WTC11 (cell line): ENCODE measurements at regions of chr1 and their contacts with region 1.

Region 1: DNA sequence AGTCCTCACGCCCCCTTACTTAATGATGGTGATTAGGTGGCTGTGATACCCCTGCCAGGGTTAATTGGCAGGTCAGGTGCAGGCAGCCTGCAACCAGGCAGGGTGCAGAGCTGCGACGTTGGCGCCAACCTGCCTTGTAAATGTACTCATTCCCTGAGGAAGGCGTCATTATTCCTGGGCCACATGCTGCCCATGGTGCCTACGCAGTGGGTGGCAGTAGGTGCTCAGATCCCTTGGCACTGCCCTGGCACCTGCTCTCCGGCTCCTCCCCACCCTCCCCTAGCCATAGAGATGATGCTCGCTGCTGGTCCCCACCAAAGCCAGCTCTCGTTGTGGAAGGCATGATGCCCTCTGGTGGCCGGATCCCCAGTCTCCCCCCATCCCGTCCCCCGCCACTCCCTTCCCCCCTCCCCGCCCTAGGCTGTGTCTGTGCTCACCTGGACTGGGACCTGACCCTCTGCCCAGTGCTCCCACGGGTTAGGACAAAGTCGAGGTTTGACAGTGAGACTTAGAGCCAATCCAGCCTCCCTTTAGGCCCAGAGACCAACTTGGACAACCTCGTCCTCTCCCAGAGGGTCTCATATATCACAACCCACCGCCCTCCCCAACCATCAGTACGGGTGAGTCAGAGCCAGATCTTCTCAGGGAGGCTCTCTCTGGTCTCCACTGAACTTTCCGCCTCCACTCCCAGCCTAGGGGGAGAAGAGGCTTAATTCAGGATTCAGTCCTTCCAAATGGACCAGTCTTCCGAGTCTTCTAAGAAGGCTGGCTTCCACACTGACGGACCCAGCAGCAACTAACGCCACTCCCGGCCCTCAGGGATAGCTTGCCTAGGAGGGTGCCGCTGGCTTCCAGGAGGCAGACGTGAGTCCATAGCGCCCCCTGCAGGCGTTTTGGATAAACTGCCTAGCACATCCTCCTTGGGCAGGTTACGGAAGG is 5.7 kb downstream of the KRTCAP2 start:
- DNase-seq: peak; percentile 95
- ATAC-seq: peak; percentile 75
- H3K4me3 Mint-ChIP-seq: peak overlapping the region; percentile 89
- H3K27ac Mint-ChIP-seq: peak overlapping the region; percentile 90
- H3K4me1 Mint-ChIP-seq: peaks cover 24% of the 10 kb centered on the region
- H3K27me3 Mint-ChIP-seq: no peaks in the 10 kb centered on the region; the same call in 1 of the 2 replicates
- CTCF ChIP-seq: peak; percentile 94

Region 2: DNA sequence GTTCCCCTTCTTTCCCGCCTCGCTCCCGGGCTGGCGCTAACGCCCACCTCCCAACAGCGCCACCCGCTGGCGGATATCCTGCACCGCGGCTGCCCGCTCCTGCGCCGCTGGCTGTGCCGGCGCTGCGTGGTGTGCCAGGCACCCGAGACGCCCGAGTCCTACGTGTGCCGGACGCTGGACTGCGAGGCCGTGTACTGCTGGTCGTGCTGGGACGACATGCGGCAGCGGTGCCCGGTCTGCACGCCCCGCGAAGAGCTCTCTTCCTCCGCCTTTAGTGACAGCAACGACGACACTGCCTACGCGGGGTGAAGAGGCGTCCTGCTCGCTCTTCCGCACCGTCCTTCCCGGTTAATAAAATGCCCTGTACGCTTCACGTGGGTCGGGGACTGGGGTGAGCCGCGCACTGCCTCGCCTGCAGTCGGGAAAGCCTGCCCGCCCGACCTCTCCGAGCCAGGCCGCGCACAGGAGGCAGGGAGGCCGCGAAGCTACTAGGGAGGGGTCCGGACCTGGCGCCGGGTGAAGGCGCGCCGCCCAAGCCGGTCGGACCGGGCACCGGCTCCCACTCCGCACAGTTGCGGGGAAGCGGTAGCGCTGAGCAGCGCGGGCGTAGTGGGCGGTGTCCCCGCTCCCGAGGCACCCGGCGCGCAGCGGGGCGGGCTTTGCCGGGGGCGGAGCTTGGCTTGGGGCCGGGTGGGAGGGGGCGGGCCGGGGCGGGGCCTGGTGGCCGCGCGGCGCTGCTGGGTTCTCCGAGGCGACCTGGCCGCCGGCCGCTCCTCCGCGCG is 116.7 kb before region 1 on chr1 and contains the start of gene ADAM15:
- CTCF ChIA-PET with region 1: interaction called, 29 read pairs
- POLR2A ChIA-PET with region 1: no interaction called
- DNase-seq: peak; percentile 92
- ATAC-seq: peak; percentile 72
- H3K4me3 Mint-ChIP-seq: peak within 1 kb of the TSS; percentile 82
- H3K27ac Mint-ChIP-seq: peak within 1 kb of the TSS; percentile 72; the same call in 1 of the 2 replicates
- H3K4me1 Mint-ChIP-seq: peaks cover 33% of the 10 kb centered on the region
- H3K27me3 Mint-ChIP-seq: peaks cover 20% of the 10 kb centered on the region
- CTCF ChIP-seq: peak; percentile 97
- total RNA-seq, gene ADAM15: 32.1 to 38.4 TPM (median 33.2 TPM) in 3 replicates

Region 3: GRCh38 chr1:155091071-155091709 is 76.2 kb before region 1 on chr1:
- CTCF ChIA-PET with region 1: interaction called, 605 read pairs
- POLR2A ChIA-PET with region 1: interaction called, 6 read pairs
- DNase-seq: peak; percentile 94
- ATAC-seq: peak; percentile 80
- H3K4me3 Mint-ChIP-seq: peak overlapping the region; percentile 32
- H3K27ac Mint-ChIP-seq: no peak overlapping the region
- H3K4me1 Mint-ChIP-seq: peaks cover 30% of the 10 kb centered on the region
- H3K27me3 Mint-ChIP-seq: peaks cover 12% of the 10 kb centered on the region
- CTCF ChIP-seq: peak; percentile 99

Region 4: GRCh38 chr1:155127105-155127964 is 40.1 kb before region 1 on chr1 and contains the start of gene EFNA1:
- CTCF ChIA-PET with region 1: interaction called, 164 read pairs
- POLR2A ChIA-PET with region 1: interaction called, 5 read pairs
- DNase-seq: peak; percentile 61
- ATAC-seq: peak; percentile 24
- H3K4me3 Mint-ChIP-seq: peak within 1 kb of the TSS; percentile 90
- H3K27ac Mint-ChIP-seq: no peak within 1 kb of the TSS; the same call in 1 of the 2 replicates
- H3K4me1 Mint-ChIP-seq: peaks cover 55% of the 10 kb centered on the region
- H3K27me3 Mint-ChIP-seq: peaks cover 55% of the 10 kb centered on the region
- CTCF ChIP-seq: no peak
- total RNA-seq, gene EFNA1: 6.0 to 7.3 TPM (median 6.5 TPM) in 3 replicates

Region 5: DNA sequence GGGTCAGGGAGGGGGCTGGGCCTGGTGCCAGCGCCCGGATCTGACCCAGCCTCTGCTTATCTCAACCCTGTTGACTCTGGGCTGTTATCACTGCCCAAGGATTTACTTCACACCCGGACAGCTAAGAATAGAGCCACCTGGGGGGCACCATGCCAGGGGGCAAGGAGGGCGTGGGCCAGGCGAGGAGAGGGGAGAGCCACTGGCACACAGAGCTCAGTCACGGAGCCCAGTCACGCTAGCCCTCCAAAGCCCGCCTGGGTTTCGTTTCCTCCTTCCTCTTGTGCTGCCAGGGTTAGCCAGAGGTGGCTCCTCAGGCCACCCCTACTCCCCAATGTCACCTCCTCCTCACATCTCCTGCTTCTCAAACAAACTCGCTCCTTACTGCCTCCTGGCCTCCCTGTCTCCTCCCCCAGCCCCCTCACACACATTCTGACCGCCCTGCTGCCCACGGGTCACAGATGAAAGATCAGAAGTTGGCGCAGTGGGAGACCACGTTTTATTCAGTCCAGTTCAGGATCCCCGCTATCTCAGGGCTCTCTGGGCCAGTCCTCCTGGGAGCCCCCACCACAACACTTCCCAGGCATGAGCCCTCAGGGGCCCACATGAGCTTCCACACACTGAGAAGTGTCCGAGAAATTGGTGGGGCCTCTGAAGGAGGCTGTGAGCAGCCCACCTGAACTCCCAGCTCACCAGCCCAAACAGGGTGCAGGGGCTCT is 18.1 kb after region 1 on chr1:
- CTCF ChIA-PET with region 1: interaction called, 31 read pairs
- POLR2A ChIA-PET with region 1: no interaction called
- DNase-seq: no peak
- ATAC-seq: peak; percentile 56
- H3K4me3 Mint-ChIP-seq: no peak overlapping the region
- H3K27ac Mint-ChIP-seq: peak overlapping the region; percentile 87
- H3K4me1 Mint-ChIP-seq: peaks cover 29% of the 10 kb centered on the region
- H3K27me3 Mint-ChIP-seq: no peaks in the 10 kb centered on the region
- CTCF ChIP-seq: no peak